Testis (tissue), 5 donors: ENCODE measurements at regions of chr15 and their contacts with region 1.

Region 1: DNA sequence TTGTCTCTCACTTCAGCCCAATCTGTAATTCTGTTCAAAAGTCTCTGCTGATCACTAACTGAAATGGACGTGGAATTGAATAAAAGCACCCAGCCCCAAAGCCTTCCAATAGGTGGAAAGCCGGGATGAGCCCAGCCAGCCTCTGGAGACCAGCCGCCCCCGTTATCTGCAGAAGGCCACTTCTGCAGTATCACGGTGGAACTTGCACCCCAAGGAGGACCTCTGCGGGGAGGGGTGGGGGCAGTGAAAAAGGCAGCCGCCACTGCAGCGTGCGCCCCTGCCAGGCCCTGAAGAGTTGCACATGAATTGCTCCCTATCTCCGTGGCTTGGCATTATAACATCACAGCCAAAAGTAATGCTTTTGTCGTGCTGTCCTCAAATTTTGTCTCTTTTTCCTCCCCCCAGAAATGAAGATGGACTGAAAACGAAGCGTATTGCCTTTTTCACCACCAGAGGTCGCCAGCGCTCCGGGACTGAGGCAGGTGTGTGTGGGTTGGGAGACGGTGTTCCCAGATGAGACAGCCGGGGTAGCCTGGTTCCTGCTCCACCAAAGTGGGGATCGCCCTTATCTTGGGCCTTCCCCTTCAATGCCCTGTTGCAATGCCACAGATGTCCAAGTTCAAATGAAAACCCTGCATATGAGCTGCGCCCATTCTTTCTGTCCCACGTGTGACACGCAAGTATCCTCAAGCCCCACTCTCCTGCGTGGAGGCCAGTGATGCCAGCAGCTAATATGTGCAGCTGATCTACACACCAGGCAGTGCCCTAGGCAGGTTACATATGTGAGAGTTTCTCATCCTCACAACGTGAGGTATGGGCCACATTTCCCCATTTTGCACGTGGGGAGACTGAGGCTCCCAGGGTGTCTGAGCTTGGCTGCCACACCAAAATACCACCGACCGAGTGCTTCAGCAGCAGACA is 96.0 kb downstream of the LRRK1 start:
- DNase-seq: peak; percentile 87
- H3K4me3 ChIP-seq: no peak overlapping the region
- H3K27ac ChIP-seq: peak overlapping the region in 1 of 2 donors; percentile 11
- H3K4me1 ChIP-seq: peaks cover 23% of the 10 kb centered on the region
- H3K27me3 ChIP-seq: no peaks in the 10 kb centered on the region
- CTCF ChIP-seq: peak; percentile 80 to 93 (median 87)
- POLR2A ChIP-seq: no peak

Region 2: GRCh38 chr15:100947760-100948429 is 67.3 kb before region 1 on chr15:
- intact Hi-C with region 1: no loop called
- DNase-seq: no peak
- H3K4me3 ChIP-seq: no peak overlapping the region
- H3K27ac ChIP-seq: no peak overlapping the region
- H3K4me1 ChIP-seq: no peaks in the 10 kb centered on the region
- H3K27me3 ChIP-seq: no peaks in the 10 kb centered on the region
- CTCF ChIP-seq: no peak
- POLR2A ChIP-seq: no peak

Region 3: GRCh38 chr15:101088788-101089583 is 73.8 kb after region 1 on chr15:
- intact Hi-C with region 1: loop called (anchors 10 kb)
- DNase-seq: peak; percentile 82
- H3K4me3 ChIP-seq: peak overlapping the region; percentile 27 to 41
- H3K27ac ChIP-seq: peak overlapping the region; percentile 22 to 75
- H3K4me1 ChIP-seq: peaks cover 49% of the 10 kb centered on the region
- H3K27me3 ChIP-seq: no peaks in the 10 kb centered on the region
- CTCF ChIP-seq: peak; percentile 98 to 100 (median 99)
- POLR2A ChIP-seq: no peak